Heart left ventricle (tissue), 16 donors: ENCODE measurements at regions of chr20 and their contacts with region 1.

Region 1: GRCh38 chr20:44282192-44282591 is 28.8 kb downstream of the FITM2 start:
- DNase-seq: no peak
- ATAC-seq: peak; percentile 59 to 83 (median 80)
- H3K4me3 ChIP-seq: no peak overlapping the region
- H3K27ac ChIP-seq: no peak overlapping the region
- H3K4me1 ChIP-seq: peaks cover 0 to 18% (median 4%) of the 10 kb centered on the region in 12 donors
- H3K27me3 ChIP-seq: no peaks in the 10 kb centered on the region
- CTCF ChIP-seq: no peak
- POLR2A ChIP-seq: no peak

Region 2: DNA sequence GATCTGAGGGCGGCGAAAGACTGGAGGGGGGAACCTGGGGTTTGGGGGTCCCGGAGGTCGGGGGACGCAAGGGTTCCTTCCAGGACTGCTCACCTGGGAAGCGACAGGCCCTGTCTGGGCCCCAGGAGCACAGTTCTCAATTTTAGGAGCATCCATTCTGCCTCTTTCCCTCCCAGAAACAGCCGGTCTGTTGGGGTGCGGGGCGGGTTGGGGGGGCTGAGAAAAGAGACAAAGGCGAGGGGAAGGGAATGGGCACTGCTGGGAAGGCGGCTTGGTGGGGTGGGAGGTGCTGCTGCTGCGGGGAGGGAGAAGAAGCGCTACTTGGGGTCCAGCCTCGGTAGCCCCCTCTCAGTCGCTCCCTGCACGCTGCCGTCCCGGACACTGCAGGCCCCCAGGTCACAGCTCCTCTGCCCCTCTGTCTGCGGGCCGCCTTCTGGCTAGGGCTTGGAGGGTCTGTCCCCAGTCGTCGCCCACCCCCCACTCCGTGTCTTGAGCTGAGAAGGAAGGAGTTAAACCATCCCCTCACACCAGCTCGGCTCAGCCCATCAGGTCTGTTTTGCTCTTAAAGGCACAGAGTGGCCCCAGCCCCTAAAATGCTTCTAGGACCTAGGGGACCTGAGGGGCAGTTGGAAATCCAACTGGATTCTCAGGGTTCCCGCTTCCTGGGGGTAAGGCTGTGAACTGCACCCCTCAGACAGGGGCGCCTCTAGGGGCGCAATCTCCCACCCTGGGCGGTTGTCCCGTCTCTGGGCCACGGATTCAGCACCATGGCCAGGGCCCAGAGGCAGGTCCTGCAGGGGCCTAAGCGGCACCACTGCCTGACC is 34.4 kb before region 1 on chr20:
- intact Hi-C with region 1: loop called in 1 of 10 experiments (anchors 5 kb)
- DNase-seq: peak in 4 of 5 donors; percentile 37 to 71 (median 48)
- ATAC-seq: peak in 3 of 4 donors; percentile 74 to 88 (median 81)
- H3K4me3 ChIP-seq: peak overlapping the region in 11 of 12 donors; percentile 4 to 53 (median 41)
- H3K27ac ChIP-seq: no peak overlapping the region
- H3K4me1 ChIP-seq: peaks cover 0 to 16% (median 9%) of the 10 kb centered on the region in 12 donors
- H3K27me3 ChIP-seq: peaks cover 0 to 21% (median 0%) of the 10 kb centered on the region in 9 donors
- CTCF ChIP-seq: peak; percentile 18 to 56 (median 35)
- POLR2A ChIP-seq: no peak